BJ (cell line): ENCODE measurements at regions of chr13 and their contacts with region 1.

Region 1: GRCh38 chr13:60355056-60355455 is 42.0 kb upstream of the TDRD3 start:
- DNase-seq: no peak
- H3K4me3 ChIP-seq: no peak overlapping the region
- H3K27me3 ChIP-seq: no peaks in the 10 kb centered on the region
- CTCF ChIP-seq: no peak

Region 2: GRCh38 chr13:60019119-60019993 is 335.7 kb before region 1 on chr13:
- CTCF ChIA-PET with region 1: no interaction called
- POLR2A ChIA-PET with region 1: no interaction called
- DNase-seq: no peak
- H3K4me3 ChIP-seq: no peak overlapping the region
- H3K27me3 ChIP-seq: no peaks in the 10 kb centered on the region
- CTCF ChIP-seq: no peak

Region 3: DNA sequence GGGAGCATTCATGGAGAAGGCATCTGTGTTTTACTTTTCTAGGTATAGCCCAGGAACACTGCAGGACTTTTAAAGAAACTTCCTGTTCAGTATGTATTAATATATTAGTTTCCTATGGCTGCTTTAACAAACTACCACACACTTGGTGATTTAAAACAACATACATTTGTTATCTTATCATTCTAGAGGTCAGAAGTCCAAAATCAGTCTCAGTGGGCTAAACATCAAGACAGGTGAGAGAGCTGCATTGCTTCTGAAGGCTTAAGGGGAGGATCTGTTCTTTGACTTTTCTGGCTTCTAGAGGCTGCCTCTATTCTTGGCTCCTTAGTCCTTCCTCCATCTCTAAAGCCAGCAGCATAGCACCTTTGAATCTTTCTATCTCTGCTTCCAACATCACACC is 153.8 kb before region 1 on chr13:
- CTCF ChIA-PET with region 1: no interaction called
- POLR2A ChIA-PET with region 1: no interaction called
- DNase-seq: no peak
- H3K4me3 ChIP-seq: no peak overlapping the region
- H3K27me3 ChIP-seq: no peaks in the 10 kb centered on the region; the same call in 1 of the 2 replicates
- CTCF ChIP-seq: no peak

Region 4: DNA sequence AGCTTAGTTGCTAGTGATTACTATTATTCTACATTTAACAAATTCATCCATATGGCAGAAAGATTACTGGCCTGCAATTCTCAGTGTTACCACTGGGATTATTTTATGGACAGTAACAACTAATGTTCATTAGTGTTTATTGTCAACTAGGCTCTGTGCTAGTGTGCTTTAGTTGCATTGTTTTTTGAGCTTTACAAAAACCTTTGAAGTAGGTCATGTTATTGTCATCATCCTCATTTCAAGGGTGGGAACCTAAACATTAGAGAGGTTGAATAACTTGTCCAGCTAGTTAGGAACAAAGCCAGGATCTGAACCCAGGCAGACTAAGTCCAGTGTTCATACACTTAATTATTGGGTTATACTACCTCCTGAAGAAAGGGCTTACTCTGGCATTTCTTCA is 14.2 kb after region 1 on chr13:
- CTCF ChIA-PET with region 1: interaction called, 10 read pairs
- POLR2A ChIA-PET with region 1: no interaction called
- DNase-seq: no peak
- H3K4me3 ChIP-seq: no peak overlapping the region
- H3K27me3 ChIP-seq: no peaks in the 10 kb centered on the region
- CTCF ChIP-seq: peak; percentile 15; the same call in 1 of the 2 replicates